Transverse colon (tissue), 4 donors: ENCODE measurements at regions of chr18 and their contacts with region 1.

Region 1: DNA sequence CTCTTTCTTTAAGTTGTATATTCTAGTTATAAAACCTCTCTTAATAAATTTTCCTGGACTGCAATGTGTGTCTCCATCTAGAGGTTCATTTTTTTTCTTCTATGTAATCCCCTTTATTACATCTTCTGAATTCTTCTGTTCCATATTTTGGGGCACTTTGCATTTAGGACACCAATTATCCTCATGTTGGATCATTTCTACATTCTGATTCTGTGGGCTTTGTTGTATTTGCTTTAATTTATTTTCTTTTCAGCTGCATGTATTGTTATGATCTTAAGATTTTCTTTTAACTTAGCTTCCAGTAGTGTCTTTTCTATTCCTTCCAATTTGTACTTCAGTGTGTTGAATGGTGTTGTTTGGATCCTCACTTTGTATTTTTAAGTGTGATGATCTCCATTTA is 5.2 kb upstream of the SKA1 start:
- DNase-seq: no peak
- H3K4me3 ChIP-seq: no peak overlapping the region
- H3K27ac ChIP-seq: no peak overlapping the region
- H3K4me1 ChIP-seq: peaks cover 0 to 14% (median 2%) of the 10 kb centered on the region in 4 donors
- H3K27me3 ChIP-seq: no peaks in the 10 kb centered on the region
- CTCF ChIP-seq: no peak
- EP300 ChIP-seq: no peak
- POLR2A ChIP-seq: no peak

Region 2: GRCh38 chr18:51447351-51448342 is 1078.0 kb after region 1 on chr18:
- in situ Hi-C with region 1: no loop called
- intact Hi-C with region 1: loop called (anchors 5 kb)
- DNase-seq: peak; percentile 15
- H3K4me3 ChIP-seq: no peak overlapping the region
- H3K27ac ChIP-seq: no peak overlapping the region
- H3K4me1 ChIP-seq: no peaks in the 10 kb centered on the region
- H3K27me3 ChIP-seq: no peaks in the 10 kb centered on the region
- CTCF ChIP-seq: no peak
- EP300 ChIP-seq: no peak
- POLR2A ChIP-seq: no peak